ENCODE measurements at regions of chr4 and their contacts with region 1.

Region 1: GRCh38 chr4:73258686-73259570 is at the start of gene ANKRD17:
- DNase-seq: peak; percentile 94
- H3K4me3 ChIP-seq: peak within 1 kb of the TSS; percentile 71
- H3K27ac ChIP-seq: peak within 1 kb of the TSS; percentile 98
- H3K4me1 ChIP-seq: peaks cover 4% of the 10 kb centered on the region
- H3K27me3 ChIP-seq: no peaks in the 10 kb centered on the region
- CTCF ChIP-seq: no peak
- total RNA-seq, gene ANKRD17: 51.5 to 59.2 TPM

Region 2: GRCh38 chr4:73069338-73070073 is 189.4 kb before region 1 on chr4 and contains the start of gene COX18:
- intact Hi-C with region 1: loop called (anchors 2 kb)
- DNase-seq: peak; percentile 98
- H3K4me3 ChIP-seq: peak within 1 kb of the TSS; percentile 58
- H3K27ac ChIP-seq: peak within 1 kb of the TSS; percentile 93
- H3K4me1 ChIP-seq: peaks cover 7% of the 10 kb centered on the region
- H3K27me3 ChIP-seq: no peaks in the 10 kb centered on the region
- CTCF ChIP-seq: no peak
- total RNA-seq, gene COX18: 19.5 to 19.6 TPM

Region 3: GRCh38 chr4:73142995-73143547 is 115.9 kb before region 1 on chr4:
- intact Hi-C with region 1: loop called (anchors 10 kb)
- DNase-seq: no peak
- H3K4me3 ChIP-seq: no peak overlapping the region
- H3K27ac ChIP-seq: no peak overlapping the region
- H3K4me1 ChIP-seq: no peaks in the 10 kb centered on the region
- H3K27me3 ChIP-seq: no peaks in the 10 kb centered on the region
- CTCF ChIP-seq: no peak

Measured in colonic mucosa (tissue), 4 donors.